H1 (cell line): ENCODE measurements at regions of chr2 and their contacts with region 1.

Region 1: GRCh38 chr2:219186754-219187456 is 8.8 kb downstream of the RETREG2 start:
- DNase-seq: no peak
- H3K4me3 ChIP-seq: no peak overlapping the region
- H3K27ac ChIP-seq: no peak overlapping the region
- H3K4me1 ChIP-seq: no peaks in the 10 kb centered on the region
- H3K27me3 ChIP-seq: no peaks in the 10 kb centered on the region
- CTCF ChIP-seq: no peak
- EP300 ChIP-seq: no peak
- POLR2A ChIP-seq: no peak
- RAD21 ChIP-seq: no peak

Region 2: DNA sequence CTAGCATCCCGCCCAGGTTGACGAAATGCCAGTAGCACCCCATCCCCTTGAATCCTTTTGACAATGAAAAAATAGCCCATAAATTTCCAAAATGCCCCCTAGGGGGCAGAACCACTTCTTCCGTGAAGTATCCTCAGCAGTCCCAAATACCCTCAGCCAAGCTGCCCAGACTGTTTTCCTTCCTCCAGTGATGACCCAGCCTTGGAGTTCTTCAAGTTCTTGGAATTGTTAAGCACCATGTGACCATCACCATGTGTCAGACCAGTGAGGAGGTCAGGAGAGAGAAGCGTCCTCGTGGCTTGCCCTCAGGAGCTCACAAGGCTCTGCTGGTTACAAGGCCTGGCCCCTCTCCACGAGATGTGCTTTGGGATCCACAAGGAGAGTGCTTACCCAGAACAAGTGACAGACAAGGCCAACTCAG is 15.7 kb before region 1 on chr2:
- CTCF ChIA-PET with region 1: interaction called, 14 read pairs
- POLR2A ChIA-PET with region 1: no interaction called
- DNase-seq: peak in 1 of 2 experiments; percentile 58
- H3K4me3 ChIP-seq: no peak overlapping the region
- H3K27ac ChIP-seq: no peak overlapping the region
- H3K4me1 ChIP-seq: peaks cover 0 to 7% (median 2%) of the 10 kb centered on the region in 4 experiments; a peak in 2 of 7 replicates
- H3K27me3 ChIP-seq: no peaks in the 10 kb centered on the region
- CTCF ChIP-seq: peak; percentile 19 to 62 (median 58)
- EP300 ChIP-seq: no peak
- POLR2A ChIP-seq: no peak
- RAD21 ChIP-seq: peak; percentile 47 to 57

Region 3: GRCh38 chr2:219287580-219288265 is 100.8 kb after region 1 on chr2:
- CTCF ChIA-PET with region 1: no interaction called
- POLR2A ChIA-PET with region 1: no interaction called
- DNase-seq: no peak
- H3K4me3 ChIP-seq: no peak overlapping the region
- H3K27ac ChIP-seq: no peak overlapping the region
- H3K4me1 ChIP-seq: peaks cover 0 to 10% (median 6%) of the 10 kb centered on the region in 4 experiments; a peak in 6 of 7 replicates
- H3K27me3 ChIP-seq: no peaks in the 10 kb centered on the region; a peak in 1 of 7 replicates
- CTCF ChIP-seq: no peak
- EP300 ChIP-seq: no peak
- POLR2A ChIP-seq: no peak
- RAD21 ChIP-seq: no peak

Region 4: GRCh38 chr2:219392754-219393153 is 205.8 kb after region 1 on chr2:
- CTCF ChIA-PET with region 1: no interaction called
- POLR2A ChIA-PET with region 1: no interaction called
- DNase-seq: no peak
- H3K4me3 ChIP-seq: no peak overlapping the region
- H3K27ac ChIP-seq: no peak overlapping the region
- H3K4me1 ChIP-seq: peaks cover 0 to 3% (median 0%) of the 10 kb centered on the region in 4 experiments; a peak in 2 of 7 replicates
- H3K27me3 ChIP-seq: no peaks in the 10 kb centered on the region; a peak in 1 of 7 replicates
- CTCF ChIP-seq: no peak
- EP300 ChIP-seq: no peak
- POLR2A ChIP-seq: no peak
- RAD21 ChIP-seq: no peak